H1 (cell line): ENCODE measurements at regions of chr16 and their contacts with region 1.

Region 1: GRCh38 chr16:57816334-57816745 is 14.0 kb upstream of the KIFC3 start:
- DNase-seq: no peak
- H3K4me3 ChIP-seq: no peak overlapping the region
- H3K27ac ChIP-seq: no peak overlapping the region
- H3K4me1 ChIP-seq: peaks cover 0 to 14% (median 8%) of the 10 kb centered on the region in 4 experiments; a peak in 6 of 7 replicates
- H3K27me3 ChIP-seq: peaks cover 0 to 2% (median 0%) of the 10 kb centered on the region in 4 experiments; a peak in 3 of 7 replicates
- CTCF ChIP-seq: no peak
- EP300 ChIP-seq: peak in 1 of 2 experiments; percentile 43; a peak in 1 of 3 replicates
- POLR2A ChIP-seq: no peak
- RAD21 ChIP-seq: no peak; a peak in 1 of 4 replicates

Region 2: DNA sequence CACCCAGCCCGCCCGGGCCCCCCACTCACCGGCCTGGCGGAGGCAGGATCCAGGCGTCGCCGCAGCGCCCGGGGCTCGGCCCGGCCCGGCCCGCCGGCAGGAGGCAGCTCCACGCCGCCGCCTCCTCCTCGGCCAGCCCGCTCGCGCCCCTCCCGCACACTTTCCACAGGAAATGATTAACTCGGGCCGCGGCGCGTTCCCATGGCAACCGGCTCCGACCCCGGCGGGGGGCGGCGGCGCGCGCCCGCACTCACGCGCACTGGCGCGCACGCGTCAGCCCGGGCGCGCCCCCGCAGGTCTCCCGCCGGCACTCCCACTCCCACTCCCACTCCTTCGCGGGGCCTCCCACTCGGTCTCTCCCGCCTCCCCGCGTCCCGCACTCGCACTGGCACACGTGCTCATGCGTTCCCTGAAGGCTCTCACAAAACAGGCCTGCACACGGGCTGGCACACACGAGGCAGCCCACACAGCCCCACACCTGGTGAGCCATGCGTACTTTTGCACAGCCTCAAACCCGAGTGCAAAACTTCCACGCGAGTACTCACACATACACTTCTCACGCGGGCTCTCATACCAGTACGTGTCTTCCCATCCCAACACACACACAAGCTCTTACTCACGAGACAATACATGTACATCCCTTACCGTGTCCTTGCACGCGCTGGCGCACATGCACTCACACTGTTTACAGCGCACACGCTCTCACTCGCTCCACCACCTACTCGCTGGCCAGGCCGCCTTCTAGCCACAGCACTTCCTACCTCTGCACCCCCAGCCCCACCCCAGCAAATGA is 13.8 kb before region 1 on chr16 and contains the start of gene KIFC3:
- CTCF ChIA-PET with region 1: interaction called, 10 read pairs
- POLR2A ChIA-PET with region 1: interaction called, 4 read pairs
- DNase-seq: peak in 1 of 2 experiments; percentile 71
- H3K4me3 ChIP-seq: peak within 1 kb of the TSS; percentile 51 to 60 (median 59)
- H3K27ac ChIP-seq: no peak within 1 kb of the TSS
- H3K4me1 ChIP-seq: peaks cover 0 to 38% (median 28%) of the 10 kb centered on the region in 4 experiments; a peak in 6 of 7 replicates
- H3K27me3 ChIP-seq: peaks cover 0 to 33% (median 24%) of the 10 kb centered on the region in 4 experiments; a peak in 6 of 7 replicates
- CTCF ChIP-seq: peak in 1 of 3 experiments; percentile 10; a peak in 1 of 4 replicates
- EP300 ChIP-seq: no peak
- POLR2A ChIP-seq: no peak
- RAD21 ChIP-seq: no peak
- total RNA-seq, gene KIFC3: 5.3 and 7.1 TPM in 2 replicates

Region 3: GRCh38 chr16:57828272-57829161 is 12.2 kb after region 1 on chr16:
- CTCF ChIA-PET with region 1: interaction called, 17 read pairs
- POLR2A ChIA-PET with region 1: interaction called, 5 read pairs
- DNase-seq: no peak
- H3K4me3 ChIP-seq: no peak overlapping the region
- H3K27ac ChIP-seq: no peak overlapping the region
- H3K4me1 ChIP-seq: no peaks in the 10 kb centered on the region; a peak in 2 of 7 replicates
- H3K27me3 ChIP-seq: no peaks in the 10 kb centered on the region
- CTCF ChIP-seq: peak; percentile 41 to 59 (median 44)
- EP300 ChIP-seq: no peak
- POLR2A ChIP-seq: no peak
- RAD21 ChIP-seq: peak in 1 of 2 experiments; percentile 41; a peak in 2 of 4 replicates

Region 4: GRCh38 chr16:57899771-57900661 is 83.7 kb after region 1 on chr16:
- CTCF ChIA-PET with region 1: no interaction called
- POLR2A ChIA-PET with region 1: no interaction called
- DNase-seq: peak in 1 of 2 experiments; percentile 89
- H3K4me3 ChIP-seq: no peak overlapping the region
- H3K27ac ChIP-seq: no peak overlapping the region
- H3K4me1 ChIP-seq: no peaks in the 10 kb centered on the region; a peak in 2 of 7 replicates
- H3K27me3 ChIP-seq: no peaks in the 10 kb centered on the region
- CTCF ChIP-seq: peak; percentile 86 to 93 (median 88)
- EP300 ChIP-seq: no peak
- POLR2A ChIP-seq: no peak
- RAD21 ChIP-seq: peak; percentile 91 to 96

Region 5: GRCh38 chr16:57914240-57915173 is 98.2 kb after region 1 on chr16:
- CTCF ChIA-PET with region 1: no interaction called
- POLR2A ChIA-PET with region 1: no interaction called
- DNase-seq: no peak
- H3K4me3 ChIP-seq: no peak overlapping the region
- H3K27ac ChIP-seq: no peak overlapping the region
- H3K4me1 ChIP-seq: peaks cover 0 to 13% (median 2%) of the 10 kb centered on the region in 4 experiments; a peak in 4 of 7 replicates
- H3K27me3 ChIP-seq: no peaks in the 10 kb centered on the region
- CTCF ChIP-seq: no peak
- EP300 ChIP-seq: no peak
- POLR2A ChIP-seq: no peak
- RAD21 ChIP-seq: no peak

Region 6: GRCh38 chr16:58176608-58177352 is 360.4 kb after region 1 on chr16:
- CTCF ChIA-PET with region 1: no interaction called
- POLR2A ChIA-PET with region 1: no interaction called
- DNase-seq: no peak
- H3K4me3 ChIP-seq: no peak overlapping the region
- H3K27ac ChIP-seq: no peak overlapping the region
- H3K4me1 ChIP-seq: no peaks in the 10 kb centered on the region
- H3K27me3 ChIP-seq: no peaks in the 10 kb centered on the region
- CTCF ChIP-seq: no peak
- EP300 ChIP-seq: no peak
- POLR2A ChIP-seq: no peak
- RAD21 ChIP-seq: no peak